Activated B cell treated with CpG ODN at 0.5 μM for 24 hours (primary cell): ENCODE measurements at regions of chr10 and their contacts with region 1.

Region 1: GRCh38 chr10:62681211-62681940 is 123.1 kb upstream of the ADO start:
- DNase-seq: peak; percentile 58
- ATAC-seq: peak; percentile 96
- H3K4me3 Mint-ChIP-seq: peak overlapping the region; percentile 46
- H3K27ac Mint-ChIP-seq: peak overlapping the region; percentile 55
- H3K4me1 Mint-ChIP-seq: peaks cover 22% of the 10 kb centered on the region
- H3K27me3 Mint-ChIP-seq: no peaks in the 10 kb centered on the region
- CTCF ChIP-seq: no peak

Region 2: DNA sequence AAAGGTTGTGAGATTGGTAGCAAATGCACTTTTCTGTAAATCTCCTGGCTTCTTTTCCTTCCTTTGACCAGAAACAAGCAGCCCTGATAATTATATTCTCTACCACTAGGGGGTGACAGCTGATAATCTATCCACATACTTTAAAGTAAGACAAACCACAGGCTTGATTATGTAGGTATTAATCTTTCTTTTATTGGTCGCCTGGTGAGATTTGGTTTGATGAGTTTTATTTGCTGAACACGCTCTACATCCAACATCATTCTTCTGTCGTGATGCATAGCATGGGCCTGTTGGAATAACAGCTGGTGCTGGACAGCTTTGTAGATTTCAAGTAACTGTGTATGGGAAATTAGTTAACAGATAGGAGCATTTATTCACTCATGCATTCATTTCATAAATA is 243.7 kb before region 1 on chr10:
- CTCF ChIA-PET with region 1: no interaction called
- POLR2A ChIA-PET with region 1: no interaction called
- intact Hi-C with region 1: loop called (anchors 5 kb)
- DNase-seq: no peak
- ATAC-seq: peak; percentile 70
- H3K4me3 Mint-ChIP-seq: no peak overlapping the region
- H3K27ac Mint-ChIP-seq: no peak overlapping the region
- H3K4me1 Mint-ChIP-seq: peaks cover 2% of the 10 kb centered on the region
- H3K27me3 Mint-ChIP-seq: no peaks in the 10 kb centered on the region
- CTCF ChIP-seq: peak; percentile 90

Region 3: GRCh38 chr10:62528441-62528840 is 152.9 kb before region 1 on chr10:
- CTCF ChIA-PET with region 1: interaction called, 7 read pairs
- POLR2A ChIA-PET with region 1: no interaction called
- intact Hi-C with region 1: loop called (anchors 1 kb)
- DNase-seq: no peak
- ATAC-seq: peak; percentile 59
- H3K4me3 Mint-ChIP-seq: peak overlapping the region; percentile 64
- H3K27ac Mint-ChIP-seq: peak overlapping the region; percentile 92
- H3K4me1 Mint-ChIP-seq: peaks cover 58% of the 10 kb centered on the region
- H3K27me3 Mint-ChIP-seq: no peaks in the 10 kb centered on the region
- CTCF ChIP-seq: no peak

Region 4: DNA sequence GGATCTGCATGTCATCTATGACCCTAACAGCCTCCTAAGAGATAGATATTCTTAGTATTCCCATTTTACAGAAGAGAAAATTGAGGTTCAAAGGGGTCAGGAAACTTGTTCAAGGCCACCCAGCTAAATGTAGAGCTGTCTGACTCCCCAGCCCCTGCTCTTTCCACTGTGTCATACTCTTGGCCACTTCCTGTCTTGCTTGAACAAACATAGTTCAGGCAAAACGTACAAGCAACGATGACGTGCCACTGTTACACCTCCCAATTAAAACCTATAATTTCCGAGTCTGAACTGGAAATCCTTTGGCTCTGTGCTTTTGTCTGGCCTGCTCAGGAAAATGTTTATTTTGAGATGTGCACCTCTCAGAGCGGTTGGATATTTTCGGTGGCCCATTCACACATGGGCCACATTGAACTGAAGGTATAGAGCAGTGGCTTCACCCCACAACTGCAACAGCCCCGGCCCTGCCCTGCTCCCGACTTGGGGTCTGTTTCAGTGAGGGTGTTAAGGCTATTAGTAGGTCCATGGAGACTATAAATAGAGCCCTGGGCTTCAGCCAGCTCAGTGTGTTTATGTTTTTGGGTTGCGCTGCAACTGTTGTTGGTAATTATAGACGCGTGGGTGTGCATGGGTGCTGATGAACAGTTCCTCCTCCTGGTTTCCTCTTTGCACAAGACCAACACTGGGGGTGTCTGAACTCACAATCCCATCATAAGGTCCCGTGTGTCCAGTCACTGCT is 49.1 kb before region 1 on chr10:
- CTCF ChIA-PET with region 1: interaction called, 5 read pairs
- POLR2A ChIA-PET with region 1: interaction called, 5 read pairs
- intact Hi-C with region 1: loop called (anchors 1 kb)
- DNase-seq: no peak
- ATAC-seq: peak; percentile 81
- H3K4me3 Mint-ChIP-seq: peak overlapping the region; percentile 83
- H3K27ac Mint-ChIP-seq: peak overlapping the region; percentile 98
- H3K4me1 Mint-ChIP-seq: peaks cover 58% of the 10 kb centered on the region
- H3K27me3 Mint-ChIP-seq: no peaks in the 10 kb centered on the region
- CTCF ChIP-seq: no peak

Region 5: DNA sequence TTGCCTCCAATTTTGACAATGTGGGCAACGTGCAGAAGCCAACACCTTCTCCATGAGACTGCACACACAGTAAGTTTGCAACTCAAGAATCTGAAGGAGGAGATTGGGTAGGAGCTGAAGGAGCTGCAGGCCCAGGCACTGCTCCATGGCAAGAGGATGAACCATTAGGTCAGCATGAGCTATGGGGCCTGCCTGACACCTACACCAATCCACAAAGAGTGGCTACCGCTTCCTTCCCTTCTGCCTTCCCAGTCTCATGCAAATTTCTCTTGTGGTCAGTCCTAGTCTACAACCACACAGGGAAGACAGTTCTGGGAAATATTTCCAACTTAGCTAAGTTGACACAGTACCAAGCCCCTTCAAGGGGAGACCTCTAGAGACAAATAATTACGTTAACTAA is 18.9 kb before region 1 on chr10:
- CTCF ChIA-PET with region 1: no interaction called
- POLR2A ChIA-PET with region 1: no interaction called
- intact Hi-C with region 1: loop called (anchors 2 kb)
- DNase-seq: no peak
- ATAC-seq: no peak
- H3K4me3 Mint-ChIP-seq: no peak overlapping the region
- H3K27ac Mint-ChIP-seq: no peak overlapping the region
- H3K4me1 Mint-ChIP-seq: peaks cover 5% of the 10 kb centered on the region
- H3K27me3 Mint-ChIP-seq: no peaks in the 10 kb centered on the region
- CTCF ChIP-seq: no peak

Region 6: DNA sequence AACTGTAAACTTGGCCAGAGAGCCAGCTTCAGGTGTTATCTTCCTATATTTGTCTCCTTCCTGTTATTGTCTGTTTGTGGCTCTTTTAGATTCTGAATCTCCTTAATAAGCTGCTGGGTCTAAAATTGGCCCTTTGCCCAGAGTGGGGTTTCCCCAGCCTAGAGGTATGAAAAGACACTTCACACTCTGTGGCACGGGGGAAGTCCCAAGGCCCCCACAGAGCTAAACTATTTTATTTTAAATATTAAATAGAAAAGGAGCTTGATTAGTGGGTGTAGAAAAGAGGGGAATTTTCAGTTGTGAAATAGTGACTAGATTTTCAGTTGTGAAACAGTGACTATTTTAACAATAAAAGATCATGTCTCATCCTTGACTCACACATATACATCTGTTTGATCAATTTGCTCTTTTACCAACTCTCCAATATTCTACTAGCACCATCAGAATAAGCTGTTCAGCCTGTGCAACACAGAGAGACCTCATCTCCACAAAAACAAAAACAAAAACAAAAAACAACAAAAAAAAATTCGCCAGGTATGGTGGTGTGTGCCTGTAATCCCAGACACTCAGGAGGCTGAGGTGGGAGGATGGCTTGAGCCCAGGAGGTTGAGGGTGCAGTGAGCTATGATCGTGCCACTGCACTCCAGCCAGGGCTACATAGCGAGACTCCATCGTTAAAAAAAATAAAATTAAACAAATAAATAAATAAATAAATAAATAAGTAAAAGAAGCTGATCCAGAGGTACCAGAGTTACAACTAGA is 98.3 kb after region 1 on chr10:
- CTCF ChIA-PET with region 1: interaction called, 6 read pairs
- POLR2A ChIA-PET with region 1: interaction called, 4 read pairs
- intact Hi-C with region 1: loop called (anchors 2 kb)
- DNase-seq: peak; percentile 40
- ATAC-seq: peak; percentile 99
- H3K4me3 Mint-ChIP-seq: peak overlapping the region; percentile 50
- H3K27ac Mint-ChIP-seq: peak overlapping the region; percentile 76
- H3K4me1 Mint-ChIP-seq: peaks cover 33% of the 10 kb centered on the region
- H3K27me3 Mint-ChIP-seq: no peaks in the 10 kb centered on the region
- CTCF ChIP-seq: no peak

Region 7: GRCh38 chr10:62794306-62794705 is 112.9 kb after region 1 on chr10:
- CTCF ChIA-PET with region 1: no interaction called
- POLR2A ChIA-PET with region 1: no interaction called
- intact Hi-C with region 1: no loop called
- DNase-seq: no peak
- ATAC-seq: no peak
- H3K4me3 Mint-ChIP-seq: no peak overlapping the region
- H3K27ac Mint-ChIP-seq: no peak overlapping the region
- H3K4me1 Mint-ChIP-seq: no peaks in the 10 kb centered on the region
- H3K27me3 Mint-ChIP-seq: peaks cover 8% of the 10 kb centered on the region
- CTCF ChIP-seq: no peak

Region 8: DNA sequence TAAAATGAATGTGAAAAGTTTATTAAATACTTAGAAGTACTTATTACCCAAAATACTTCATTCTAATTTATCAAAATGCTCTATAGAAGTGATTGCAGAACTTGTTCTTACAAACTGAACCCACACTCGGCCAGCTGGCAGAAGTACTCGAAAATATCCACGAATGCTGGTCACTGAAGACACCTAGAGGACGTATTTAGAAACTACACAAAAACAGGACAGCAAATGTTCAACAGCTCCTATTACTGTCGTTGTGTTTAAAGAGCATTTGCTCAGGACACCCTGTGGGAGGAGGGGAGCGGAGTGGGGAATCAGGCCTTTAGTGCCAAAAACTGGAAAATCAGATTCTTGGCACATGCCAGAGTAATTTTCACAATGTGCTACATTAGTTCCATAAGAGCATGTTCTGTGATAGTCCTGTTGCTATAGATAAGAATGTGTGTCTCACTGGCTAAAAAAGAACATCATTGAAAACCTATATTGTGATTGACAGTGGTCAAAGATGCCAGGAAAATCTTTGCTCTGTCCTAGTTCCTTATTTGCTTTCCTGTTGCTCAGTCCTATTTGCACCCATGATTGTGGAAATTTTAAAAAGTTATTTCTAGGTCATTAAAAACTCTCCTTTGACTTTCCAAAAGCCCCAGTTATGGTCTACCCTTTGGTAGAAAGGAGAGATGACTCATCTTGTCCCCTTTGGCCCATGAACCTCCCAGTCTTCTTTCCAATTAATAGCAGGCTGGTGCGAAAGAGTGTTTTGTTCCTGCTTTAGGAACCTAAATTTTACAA is 402.7 kb after region 1 on chr10:
- CTCF ChIA-PET with region 1: no interaction called
- POLR2A ChIA-PET with region 1: no interaction called
- intact Hi-C with region 1: loop called (anchors 2 kb)
- DNase-seq: no peak
- ATAC-seq: peak; percentile 77
- H3K4me3 Mint-ChIP-seq: no peak overlapping the region
- H3K27ac Mint-ChIP-seq: no peak overlapping the region
- H3K4me1 Mint-ChIP-seq: no peaks in the 10 kb centered on the region
- H3K27me3 Mint-ChIP-seq: peaks cover 9% of the 10 kb centered on the region
- CTCF ChIP-seq: peak; percentile 53